ENCODE measurements at regions of chr3 and their contacts with region 1.

Region 1: DNA sequence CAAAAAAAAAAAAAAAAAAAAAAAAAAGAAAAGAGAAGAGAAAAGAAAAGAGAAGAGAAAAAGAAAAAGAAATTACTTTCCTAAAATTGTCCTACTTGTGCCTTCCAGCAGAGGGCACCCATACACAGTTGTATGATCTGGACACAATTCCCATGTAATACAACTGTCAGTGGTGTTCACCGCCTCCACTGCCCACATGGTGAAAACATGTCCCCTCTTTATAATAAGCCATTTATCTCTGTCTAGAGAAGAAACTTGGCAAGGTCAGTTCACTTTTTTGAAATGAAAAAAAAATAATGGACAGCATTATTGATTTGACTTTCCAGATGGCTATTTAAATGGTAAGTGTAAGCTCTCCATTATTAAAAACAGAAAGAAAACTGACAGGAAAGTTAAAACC is 459.4 kb downstream of the GBE1 start:
- DNase-seq: peak; percentile 15
- H3K4me3 ChIP-seq: no peak overlapping the region
- H3K27ac ChIP-seq: no peak overlapping the region
- H3K4me1 ChIP-seq: no peaks in the 10 kb centered on the region
- H3K27me3 ChIP-seq: no peaks in the 10 kb centered on the region
- CTCF ChIP-seq: peak; percentile 61 to 70

Region 2: DNA sequence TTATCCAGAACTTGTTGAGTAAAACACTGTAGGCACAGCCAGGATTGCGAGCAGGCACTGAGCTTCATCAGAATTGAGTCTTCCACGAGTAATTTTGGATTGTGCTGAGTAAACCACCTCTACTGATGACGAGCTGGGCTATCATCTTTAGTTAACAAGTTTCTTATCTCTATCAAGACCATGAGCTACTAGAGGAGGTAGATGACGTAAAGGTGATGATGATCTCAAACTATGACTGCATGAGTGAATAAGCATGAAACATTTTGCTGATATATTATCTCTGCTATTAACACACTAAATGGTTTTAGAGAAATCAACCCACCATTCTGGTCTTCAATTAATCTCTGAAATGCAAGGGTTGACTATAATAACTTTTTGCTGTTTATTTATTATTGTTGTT is 46.6 kb before region 1 on chr3:
- CTCF ChIA-PET with region 1: no interaction called
- dilution Hi-C with region 1: no loop called
- in situ Hi-C with region 1: no loop called
- intact Hi-C with region 1: no loop called
- DNase-seq: no peak
- H3K4me3 ChIP-seq: no peak overlapping the region
- H3K27ac ChIP-seq: no peak overlapping the region
- H3K4me1 ChIP-seq: no peaks in the 10 kb centered on the region
- H3K27me3 ChIP-seq: no peaks in the 10 kb centered on the region
- CTCF ChIP-seq: no peak

Region 3: DNA sequence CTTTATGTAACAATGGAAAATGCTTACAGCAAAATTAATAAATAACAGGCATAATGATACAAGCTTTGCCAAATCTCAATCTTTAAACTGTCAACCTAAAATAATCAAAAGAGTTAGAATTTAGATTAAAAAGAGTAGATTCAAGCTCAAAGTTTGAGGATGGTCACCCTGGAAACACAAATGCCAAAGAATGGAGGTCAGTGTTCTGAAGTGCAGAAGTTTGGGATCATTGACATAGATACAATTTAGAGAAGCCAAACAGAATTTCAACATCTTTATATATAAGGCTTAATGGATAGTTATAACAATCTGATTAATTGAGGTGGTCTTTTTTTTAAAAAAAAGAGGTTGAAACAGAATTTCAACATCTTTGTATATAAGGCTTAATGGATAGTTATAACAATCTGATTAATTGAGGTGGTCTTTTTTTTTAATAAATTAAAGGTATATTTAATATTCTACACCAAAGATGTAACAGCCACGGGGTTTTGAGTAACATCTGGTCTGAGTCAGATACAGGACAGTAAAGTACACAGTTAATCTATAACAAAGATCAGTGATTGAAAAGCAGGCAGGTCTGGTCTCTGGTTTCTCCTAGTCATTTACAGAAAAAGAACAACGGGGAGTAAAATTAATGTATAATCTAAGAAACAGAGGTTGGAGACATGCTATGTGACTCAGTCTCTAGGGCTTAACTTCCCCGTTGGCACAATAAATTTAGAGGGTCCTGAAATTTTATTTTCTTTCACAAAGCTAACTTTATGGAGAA is 31.3 kb before region 1 on chr3:
- CTCF ChIA-PET with region 1: no interaction called
- dilution Hi-C with region 1: no loop called
- in situ Hi-C with region 1: no loop called
- intact Hi-C with region 1: no loop called
- DNase-seq: no peak
- H3K4me3 ChIP-seq: no peak overlapping the region
- H3K27ac ChIP-seq: no peak overlapping the region
- H3K4me1 ChIP-seq: no peaks in the 10 kb centered on the region
- H3K27me3 ChIP-seq: no peaks in the 10 kb centered on the region
- CTCF ChIP-seq: no peak

Region 4: DNA sequence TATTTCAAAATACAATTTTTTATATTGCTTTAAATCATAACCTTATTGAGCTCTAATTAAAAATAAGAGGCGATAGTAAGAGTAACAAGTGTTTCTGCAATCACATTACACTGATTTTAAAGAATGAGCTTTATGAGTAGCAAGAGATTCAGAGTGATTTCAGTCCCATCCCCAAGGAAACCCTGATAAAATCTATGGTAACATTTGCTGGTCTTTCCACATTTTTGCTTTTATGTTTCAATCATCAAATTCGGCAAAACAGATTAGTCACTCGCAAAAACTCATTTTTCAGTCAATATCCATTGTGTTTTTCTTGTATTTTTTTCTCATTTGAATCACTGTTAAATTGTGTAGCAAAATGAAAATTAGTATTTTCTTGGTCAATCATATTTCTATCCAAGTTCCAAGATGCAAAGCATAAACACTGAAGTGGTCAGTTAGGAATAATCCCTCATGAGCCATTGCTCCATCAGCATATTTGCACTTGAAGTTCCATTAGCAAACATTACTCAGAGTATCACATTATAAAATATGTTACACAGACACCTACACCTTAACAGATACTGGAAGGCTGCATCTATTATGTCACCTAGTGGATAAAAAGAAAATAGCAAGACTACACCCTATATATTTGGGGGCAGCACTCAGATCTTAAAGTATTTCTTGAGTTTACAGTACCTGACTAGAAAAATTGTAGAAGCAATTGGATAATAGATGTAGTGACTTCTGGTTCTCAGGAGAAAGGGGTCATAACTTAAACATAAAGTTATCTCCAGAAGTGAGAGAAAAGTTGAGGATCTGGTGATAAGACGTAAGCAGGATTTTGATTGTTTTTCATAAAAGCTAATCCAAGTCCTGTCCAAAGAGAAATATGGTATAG is 36.9 kb after region 1 on chr3:
- CTCF ChIA-PET with region 1: interaction called, 3 read pairs
- dilution Hi-C with region 1: no loop called
- in situ Hi-C with region 1: no loop called
- intact Hi-C with region 1: loop called (anchors 1 kb)
- DNase-seq: peak; percentile 30
- H3K4me3 ChIP-seq: no peak overlapping the region
- H3K27ac ChIP-seq: no peak overlapping the region
- H3K4me1 ChIP-seq: no peaks in the 10 kb centered on the region
- H3K27me3 ChIP-seq: no peaks in the 10 kb centered on the region
- CTCF ChIP-seq: peak; percentile 59 to 62

Region 5: DNA sequence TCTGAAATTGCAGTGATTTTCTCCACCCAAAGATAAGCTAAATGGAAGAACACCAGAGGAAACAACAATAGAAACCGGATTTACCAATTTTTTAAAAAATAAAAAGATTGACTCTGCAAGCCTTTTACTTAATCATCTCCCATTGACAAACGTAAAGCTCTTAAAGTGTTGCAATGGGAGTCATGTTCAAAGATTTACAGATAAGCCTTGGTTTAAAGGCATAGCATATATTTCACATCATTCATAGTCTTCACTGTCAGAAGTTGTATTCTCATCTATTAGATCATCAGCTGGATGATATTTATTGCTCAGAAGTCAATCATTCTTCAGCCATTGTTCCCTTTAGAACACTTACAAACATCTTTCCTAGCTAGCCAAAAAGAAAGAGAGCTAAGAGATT is 61.8 kb after region 1 on chr3:
- CTCF ChIA-PET with region 1: no interaction called
- dilution Hi-C with region 1: no loop called
- in situ Hi-C with region 1: no loop called
- intact Hi-C with region 1: no loop called
- DNase-seq: no peak
- H3K4me3 ChIP-seq: no peak overlapping the region
- H3K27ac ChIP-seq: no peak overlapping the region
- H3K4me1 ChIP-seq: no peaks in the 10 kb centered on the region
- H3K27me3 ChIP-seq: peaks cover 3% of the 10 kb centered on the region
- CTCF ChIP-seq: no peak

Measured in mammary epithelial cell (primary cell).